SK-N-SH (cell line): ENCODE measurements at regions of chr12 and their contacts with region 1.

Region 1: GRCh38 chr12:50074936-50075807 is 10.0 kb upstream of the SMARCD1 start:
- DNase-seq: peak; percentile 92
- H3K4me3 ChIP-seq: no peak overlapping the region; a peak in 1 of 4 replicates
- H3K27ac ChIP-seq: no peak overlapping the region; a peak in 1 of 4 replicates
- H3K4me1 ChIP-seq: peaks cover 0 to 9% of the 10 kb centered on the region in 2 experiments; a peak in 1 of 4 replicates
- H3K27me3 ChIP-seq: no peaks in the 10 kb centered on the region
- CTCF ChIP-seq: peak; percentile 86
- EP300 ChIP-seq: no peak
- RAD21 ChIP-seq: peak; percentile 92

Region 2: GRCh38 chr12:49776413-49776812 is 298.8 kb before region 1 on chr12:
- CTCF ChIA-PET with region 1: interaction called, 13 read pairs
- POLR2A ChIA-PET with region 1: no interaction called
- DNase-seq: peak; percentile 79
- H3K4me3 ChIP-seq: peak overlapping the region in 1 of 2 experiments; percentile 9; a peak in 1 of 4 replicates
- H3K27ac ChIP-seq: no peak overlapping the region
- H3K4me1 ChIP-seq: no peaks in the 10 kb centered on the region
- H3K27me3 ChIP-seq: no peaks in the 10 kb centered on the region
- CTCF ChIP-seq: peak; percentile 84
- EP300 ChIP-seq: no peak
- RAD21 ChIP-seq: peak; percentile 91

Region 3: DNA sequence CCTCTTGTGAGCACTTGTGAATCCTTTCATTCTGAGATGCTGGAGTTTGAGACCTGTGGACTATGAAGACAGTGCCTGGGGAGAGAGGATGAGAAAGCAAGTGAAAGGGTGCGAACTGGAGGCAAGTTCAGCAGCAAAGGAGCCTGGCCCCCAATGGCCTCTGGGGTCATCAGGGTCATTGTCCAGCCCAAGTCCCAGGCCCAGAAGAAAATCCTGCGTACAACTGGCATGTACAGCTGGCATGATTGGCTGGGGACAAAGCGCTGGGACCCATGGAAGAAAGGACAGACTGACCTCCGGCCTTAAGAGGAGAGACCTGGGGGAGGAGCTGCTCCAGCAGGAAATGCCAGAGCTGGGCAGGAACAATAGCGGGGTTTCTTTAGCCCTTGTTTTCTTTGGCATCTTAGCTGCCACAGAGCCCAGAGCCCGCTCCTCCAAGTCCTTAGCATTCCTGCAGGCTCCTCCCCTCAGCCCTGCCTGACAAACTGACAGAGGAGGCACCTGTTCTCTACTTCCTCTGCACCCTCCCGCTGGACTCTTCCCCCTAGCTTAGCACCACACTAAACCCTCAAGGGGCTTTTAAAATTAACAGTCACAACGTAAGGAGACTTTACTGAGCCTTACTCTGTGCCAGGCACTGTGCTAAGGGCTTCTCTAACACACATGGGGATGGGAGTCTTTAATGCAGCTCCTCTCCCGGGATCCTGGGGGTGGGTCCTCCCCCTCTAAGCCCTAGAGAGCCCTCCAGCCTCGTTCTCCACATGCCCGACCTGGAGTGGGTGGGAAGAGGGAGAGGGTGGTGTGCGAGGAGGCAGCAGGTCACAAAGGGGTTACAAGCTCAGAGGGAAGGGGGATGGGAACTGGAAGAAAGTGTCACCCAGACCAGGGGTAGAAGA is 115.4 kb before region 1 on chr12:
- CTCF ChIA-PET with region 1: interaction called, 1,401 read pairs
- POLR2A ChIA-PET with region 1: no interaction called
- DNase-seq: no peak
- H3K4me3 ChIP-seq: no peak overlapping the region
- H3K27ac ChIP-seq: 0 out of 4 replicates have a peak overlapping the region, but pooled peaks of 1 of the 2 experiments have one; percentile 18
- H3K4me1 ChIP-seq: peaks cover 3 to 19% of the 10 kb centered on the region in 2 experiments; a peak in 3 of 4 replicates
- H3K27me3 ChIP-seq: no peaks in the 10 kb centered on the region
- CTCF ChIP-seq: no peak
- EP300 ChIP-seq: 0 out of 4 replicates have a peak, but pooled peaks of 1 of the 2 experiments have one; percentile 49
- RAD21 ChIP-seq: no peak

Region 4: DNA sequence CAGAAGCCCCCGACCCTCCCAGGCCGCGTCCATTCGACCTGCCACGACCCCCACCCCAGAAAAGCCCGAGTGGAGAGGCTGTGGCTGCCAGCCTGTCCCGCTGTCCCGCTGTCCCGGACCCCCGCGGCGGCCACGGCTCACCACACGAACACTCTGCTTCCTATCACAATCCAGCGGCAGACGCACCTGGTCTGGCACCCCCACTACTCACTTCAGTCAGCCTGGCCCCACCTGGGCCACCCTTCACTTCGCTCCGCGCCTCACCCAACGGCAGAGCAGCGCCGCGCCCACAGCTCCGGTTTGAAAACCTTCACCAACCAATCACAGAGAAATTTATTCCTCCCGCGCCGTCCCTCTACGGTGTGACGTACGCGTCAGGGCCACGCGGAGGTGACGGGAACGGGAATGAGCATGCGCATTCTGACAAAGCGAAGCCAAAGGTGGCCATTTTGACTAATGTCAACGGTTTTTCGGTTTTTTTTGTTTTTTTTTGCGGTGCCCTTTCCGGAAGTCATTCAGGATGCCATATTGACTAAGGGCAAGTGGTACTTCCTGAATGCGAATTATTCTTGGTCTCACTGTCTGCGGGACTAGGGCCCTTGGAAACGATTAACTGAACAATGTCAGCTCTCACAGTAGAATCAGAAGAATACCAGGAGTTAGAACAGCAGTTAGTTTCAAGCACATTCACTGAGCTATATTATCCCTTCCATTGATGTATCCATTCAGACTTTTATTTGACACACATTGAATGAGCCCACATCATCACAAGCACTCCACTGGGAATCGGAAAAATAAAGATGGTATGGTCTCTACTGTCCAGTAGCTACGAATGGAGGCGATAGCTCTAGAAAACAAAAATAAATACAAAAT is 49.7 kb before region 1 on chr12 and contains the start of gene RACGAP1:
- CTCF ChIA-PET with region 1: interaction called, 10 read pairs
- POLR2A ChIA-PET with region 1: no interaction called
- DNase-seq: peak; percentile 96
- H3K4me3 ChIP-seq: peak within 1 kb of the TSS; percentile 67 to 73
- H3K27ac ChIP-seq: peak within 1 kb of the TSS; percentile 40 to 86; a peak in 3 of 4 replicates
- H3K4me1 ChIP-seq: peaks cover 0 to 2% of the 10 kb centered on the region in 2 experiments; a peak in 3 of 4 replicates
- H3K27me3 ChIP-seq: no peaks in the 10 kb centered on the region
- CTCF ChIP-seq: no peak
- EP300 ChIP-seq: peak in 1 of 2 experiments; percentile 47; a peak in 1 of 4 replicates
- RAD21 ChIP-seq: no peak; the same call in 1 of the 2 replicates
- polyA plus RNA-seq, gene RACGAP1: 21.5 and 23.4 TPM in 2 replicates

Region 5: DNA sequence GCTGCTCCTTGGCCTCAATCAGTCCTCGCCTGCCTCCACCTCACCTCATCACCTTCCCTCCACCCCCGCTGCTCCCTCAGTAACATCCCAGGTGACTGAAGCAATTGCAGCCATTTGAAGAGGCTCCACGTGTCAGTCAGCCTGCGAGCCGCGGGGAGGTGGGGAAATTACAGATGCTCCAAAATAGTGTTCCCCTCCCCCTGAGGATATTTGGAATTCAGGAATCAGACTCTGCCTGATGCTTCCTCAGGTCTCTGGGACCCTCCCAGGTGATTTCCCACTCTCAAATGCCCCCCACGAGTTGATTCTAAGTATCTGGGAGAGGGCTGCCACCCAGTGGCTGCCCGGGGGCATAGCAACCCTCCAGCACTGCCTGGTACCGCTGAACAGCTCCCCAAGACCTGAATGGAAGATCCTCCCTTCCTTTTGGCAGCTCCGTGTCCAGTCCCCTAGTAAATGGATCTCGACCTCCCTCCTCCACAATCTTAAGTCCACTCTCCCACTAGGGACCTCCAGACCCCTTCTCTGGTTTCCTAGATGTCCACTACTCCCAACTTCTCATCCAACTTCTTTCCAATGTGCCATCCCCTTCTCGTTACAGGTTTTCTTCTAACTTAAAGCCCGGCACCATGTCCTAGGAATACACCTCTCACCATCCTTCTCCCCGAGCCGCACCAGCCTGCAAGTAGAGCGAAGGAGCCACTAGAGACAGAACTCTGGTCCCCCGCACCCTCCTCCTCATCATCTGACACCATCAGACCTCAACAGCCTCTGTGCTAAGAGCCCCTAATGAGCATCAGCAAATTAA is 19.1 kb before region 1 on chr12:
- CTCF ChIA-PET with region 1: interaction called, 122 read pairs
- POLR2A ChIA-PET with region 1: no interaction called
- DNase-seq: peak; percentile 86
- H3K4me3 ChIP-seq: no peak overlapping the region; a peak in 1 of 4 replicates
- H3K27ac ChIP-seq: no peak overlapping the region
- H3K4me1 ChIP-seq: peaks cover 7 to 29% of the 10 kb centered on the region in 2 experiments; a peak in 2 of 4 replicates
- H3K27me3 ChIP-seq: peaks cover 7% of the 10 kb centered on the region
- CTCF ChIP-seq: peak; percentile 97
- EP300 ChIP-seq: no peak
- RAD21 ChIP-seq: peak; percentile 88

Region 6: DNA sequence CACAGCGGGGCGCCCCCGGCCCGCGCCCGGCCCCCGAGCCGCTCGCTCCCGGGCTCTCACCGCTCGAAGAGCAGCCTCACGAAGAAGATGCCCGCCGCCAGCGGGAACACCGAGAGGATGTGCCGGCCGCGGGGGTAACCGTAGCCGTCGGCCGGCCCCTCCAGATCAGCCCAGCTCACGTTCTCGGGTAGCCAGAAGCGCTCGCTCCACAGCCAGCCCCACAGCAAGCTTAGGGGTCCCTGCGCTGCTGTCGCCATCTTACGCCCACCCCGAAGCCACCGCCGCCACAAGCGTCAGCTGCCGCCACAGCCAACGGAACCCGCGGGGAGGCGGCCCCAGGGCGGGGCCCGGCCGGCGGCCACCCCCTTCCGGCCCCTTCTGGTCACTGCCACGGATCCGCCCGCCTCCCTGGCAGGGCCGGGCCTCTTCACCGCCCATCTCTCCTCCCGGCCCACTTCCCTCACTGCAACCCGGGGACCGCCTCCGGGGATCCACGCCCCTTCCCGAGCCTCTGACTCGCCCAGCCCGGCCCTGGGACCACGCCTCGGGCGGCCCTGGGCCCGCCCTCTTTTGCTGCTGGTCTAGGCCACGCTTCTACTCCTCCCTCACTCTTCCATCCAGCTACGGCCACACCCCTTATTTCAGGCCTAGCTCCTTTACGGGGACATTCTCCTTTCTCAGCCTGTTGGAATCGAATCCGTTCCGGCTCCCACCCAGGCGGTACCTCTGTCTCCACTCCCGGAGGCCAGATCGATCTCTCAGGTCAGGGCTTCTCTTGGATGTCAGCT is 92.1 kb after region 1 on chr12 and contains the start of gene CERS5:
- CTCF ChIA-PET with region 1: interaction called, 11 read pairs
- POLR2A ChIA-PET with region 1: no interaction called
- DNase-seq: peak; percentile 99
- H3K4me3 ChIP-seq: peak within 1 kb of the TSS; percentile 66 to 97
- H3K27ac ChIP-seq: peak within 1 kb of the TSS; percentile 71 to 90
- H3K4me1 ChIP-seq: peaks cover 0 to 10% of the 10 kb centered on the region in 2 experiments; a peak in 1 of 4 replicates
- H3K27me3 ChIP-seq: no peaks in the 10 kb centered on the region
- CTCF ChIP-seq: no peak
- EP300 ChIP-seq: no peak
- RAD21 ChIP-seq: no peak
- polyA plus RNA-seq, gene CERS5: 56.9 and 68.3 TPM in 2 replicates

Region 7: GRCh38 chr12:50314629-50315312 is 239.6 kb after region 1 on chr12:
- CTCF ChIA-PET with region 1: interaction called, 15 read pairs
- POLR2A ChIA-PET with region 1: no interaction called
- DNase-seq: peak; percentile 73
- H3K4me3 ChIP-seq: no peak overlapping the region; a peak in 1 of 4 replicates
- H3K27ac ChIP-seq: no peak overlapping the region
- H3K4me1 ChIP-seq: no peaks in the 10 kb centered on the region
- H3K27me3 ChIP-seq: no peaks in the 10 kb centered on the region
- CTCF ChIP-seq: peak; percentile 87
- EP300 ChIP-seq: no peak
- RAD21 ChIP-seq: peak; percentile 93